Stomach (tissue), 19 donors: ENCODE measurements at regions of chr4 and their contacts with region 1.

Region 1: DNA sequence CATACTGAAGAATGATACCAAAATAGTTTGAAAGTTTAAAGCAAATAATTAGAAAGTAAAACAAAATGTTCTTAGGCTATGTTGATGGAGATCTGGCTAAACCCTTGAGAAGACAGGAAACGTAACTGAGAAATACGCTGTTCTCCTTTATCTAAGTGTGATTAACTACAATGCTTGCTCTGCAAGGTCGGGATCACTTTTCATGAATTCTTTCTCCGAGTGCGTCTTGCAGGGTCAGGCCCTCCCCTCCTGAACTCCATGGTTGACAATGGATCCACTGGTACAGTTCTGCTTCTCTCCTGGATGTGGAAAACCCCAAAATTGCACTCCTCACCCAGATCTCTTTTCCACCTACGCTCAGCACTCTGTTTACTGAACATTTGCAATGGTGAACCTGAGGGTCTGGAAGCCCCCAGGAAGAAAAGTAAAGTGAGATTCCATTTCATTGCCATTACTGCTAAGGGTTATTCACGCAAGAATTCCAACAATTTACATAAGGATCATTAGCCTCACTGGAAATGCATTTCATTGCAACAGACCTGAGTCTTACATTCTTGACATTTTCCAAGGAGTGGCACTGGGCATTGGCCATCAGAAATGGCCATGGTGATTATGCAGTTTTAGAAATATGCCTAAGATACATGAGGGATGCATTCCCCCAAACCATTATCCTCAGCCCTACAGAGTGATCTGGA is 24.6 kb upstream of the WWC2 start:
- DNase-seq: no peak
- H3K4me3 ChIP-seq: no peak overlapping the region
- H3K27ac ChIP-seq: no peak overlapping the region
- H3K4me1 ChIP-seq: peaks cover 0 to 10% (median 0%) of the 10 kb centered on the region in 4 donors
- H3K27me3 ChIP-seq: no peaks in the 10 kb centered on the region
- CTCF ChIP-seq: no peak
- EP300 ChIP-seq: no peak
- POLR2A ChIP-seq: no peak

Region 2: DNA sequence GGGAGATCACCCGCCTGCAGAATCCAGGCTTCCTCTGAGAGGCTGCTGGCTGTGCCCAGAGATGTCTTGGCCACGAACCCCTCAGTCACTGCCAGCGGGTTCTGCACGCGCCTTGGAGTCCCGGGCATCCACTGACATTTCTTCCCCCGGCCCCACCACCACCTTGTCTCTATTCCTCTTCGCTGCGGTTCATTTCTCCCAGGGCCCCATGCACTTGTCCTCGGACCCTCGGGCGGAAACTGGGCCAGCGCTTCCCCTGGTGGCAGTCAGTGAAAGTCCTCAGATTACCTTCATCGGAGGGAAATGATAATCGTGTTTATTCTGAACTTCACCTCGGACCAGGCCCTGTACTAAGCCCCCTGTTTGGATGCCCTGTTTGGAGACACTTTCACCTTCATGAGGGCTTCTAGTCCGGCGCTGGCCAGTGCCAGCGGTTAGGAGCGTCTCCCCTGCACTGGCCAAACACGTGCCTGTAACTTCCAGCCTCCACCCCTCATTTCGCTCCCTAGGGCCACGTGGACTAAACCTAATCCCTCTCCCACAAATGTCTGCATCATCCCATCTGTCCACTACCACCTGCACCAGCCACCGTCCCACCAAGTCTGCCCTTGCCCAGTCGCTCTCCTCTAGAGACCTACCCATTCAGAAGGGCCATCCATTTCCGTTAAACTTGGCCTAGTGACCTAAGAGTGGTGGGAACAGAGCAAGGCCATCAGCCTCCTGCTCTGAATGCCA is 239.3 kb before region 1 on chr4:
- intact Hi-C with region 1: no loop called
- DNase-seq: no peak
- H3K4me3 ChIP-seq: no peak overlapping the region
- H3K27ac ChIP-seq: no peak overlapping the region
- H3K4me1 ChIP-seq: no peaks in the 10 kb centered on the region
- H3K27me3 ChIP-seq: peaks cover 0 to 10% (median 0%) of the 10 kb centered on the region in 3 donors
- CTCF ChIP-seq: no peak
- EP300 ChIP-seq: no peak
- POLR2A ChIP-seq: no peak

Region 3: DNA sequence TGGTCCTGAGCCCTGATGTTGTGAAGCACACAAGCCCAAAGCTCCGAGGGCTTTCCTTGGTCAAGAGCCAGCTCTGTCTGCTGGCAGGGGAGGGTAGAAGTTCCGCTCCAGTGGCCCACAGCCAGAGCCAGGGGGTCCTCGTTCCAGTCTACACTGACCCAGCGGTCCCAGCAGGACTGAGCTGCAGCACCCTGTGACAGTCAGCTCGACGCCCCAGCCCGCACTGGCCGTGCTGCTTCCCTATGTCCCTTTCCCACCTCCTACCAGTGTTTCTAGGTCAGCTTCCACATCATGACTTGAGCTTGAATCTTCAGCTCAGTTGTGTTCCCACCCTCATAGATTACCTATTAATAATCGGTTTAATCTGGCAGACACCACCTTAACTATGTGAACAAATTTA is 134.8 kb before region 1 on chr4:
- intact Hi-C with region 1: loop called (anchors 10 kb)
- DNase-seq: no peak
- H3K4me3 ChIP-seq: no peak overlapping the region
- H3K27ac ChIP-seq: no peak overlapping the region
- H3K4me1 ChIP-seq: peaks cover 0 to 7% (median 0%) of the 10 kb centered on the region in 4 donors
- H3K27me3 ChIP-seq: no peaks in the 10 kb centered on the region
- CTCF ChIP-seq: no peak
- EP300 ChIP-seq: no peak
- POLR2A ChIP-seq: no peak

Region 4: DNA sequence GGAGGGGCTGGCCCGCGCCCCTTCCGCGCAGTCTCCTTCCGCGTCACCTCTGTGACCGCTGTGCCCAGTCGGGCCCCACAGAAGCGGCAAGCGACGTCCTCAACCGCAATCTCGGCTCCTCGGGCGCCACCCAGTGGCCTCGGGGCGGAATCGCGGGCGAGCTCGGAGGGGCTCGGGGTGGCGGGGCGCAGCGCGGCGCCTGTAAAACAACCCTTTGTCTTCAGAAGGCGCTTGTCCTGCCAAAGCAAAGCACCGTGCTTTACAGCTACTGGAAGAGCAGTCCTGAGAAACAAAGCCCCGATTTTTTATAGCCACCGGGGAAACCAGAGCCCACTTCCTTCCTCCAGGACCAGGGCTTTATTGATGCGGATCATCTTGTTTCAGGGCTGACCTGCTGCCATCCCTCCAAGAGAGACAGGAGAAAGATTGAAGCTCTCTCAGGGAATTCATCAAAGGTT is 332.7 kb after region 1 on chr4:
- intact Hi-C with region 1: loop called (anchors 10 kb)
- DNase-seq: peak; percentile 88 to 96
- H3K4me3 ChIP-seq: peak overlapping the region; percentile 36 to 46 (median 38)
- H3K27ac ChIP-seq: peak overlapping the region; percentile 13 to 70 (median 61)
- H3K4me1 ChIP-seq: peaks cover 5 to 28% (median 20%) of the 10 kb centered on the region in 4 donors
- H3K27me3 ChIP-seq: no peaks in the 10 kb centered on the region
- CTCF ChIP-seq: peak in 5 of 7 experiments; percentile 72 to 95 (median 94)
- EP300 ChIP-seq: no peak
- POLR2A ChIP-seq: no peak